Activated CD8-positive, alpha-beta T cell treated with anti-CD3 and anti-CD28 coated beads, Interleukin-2, amount 10 ng/mL, durations not matched to agents 7 days and 5 days (primary cell): ENCODE measurements at regions of chr7 and their contacts with region 1.

Region 1: DNA sequence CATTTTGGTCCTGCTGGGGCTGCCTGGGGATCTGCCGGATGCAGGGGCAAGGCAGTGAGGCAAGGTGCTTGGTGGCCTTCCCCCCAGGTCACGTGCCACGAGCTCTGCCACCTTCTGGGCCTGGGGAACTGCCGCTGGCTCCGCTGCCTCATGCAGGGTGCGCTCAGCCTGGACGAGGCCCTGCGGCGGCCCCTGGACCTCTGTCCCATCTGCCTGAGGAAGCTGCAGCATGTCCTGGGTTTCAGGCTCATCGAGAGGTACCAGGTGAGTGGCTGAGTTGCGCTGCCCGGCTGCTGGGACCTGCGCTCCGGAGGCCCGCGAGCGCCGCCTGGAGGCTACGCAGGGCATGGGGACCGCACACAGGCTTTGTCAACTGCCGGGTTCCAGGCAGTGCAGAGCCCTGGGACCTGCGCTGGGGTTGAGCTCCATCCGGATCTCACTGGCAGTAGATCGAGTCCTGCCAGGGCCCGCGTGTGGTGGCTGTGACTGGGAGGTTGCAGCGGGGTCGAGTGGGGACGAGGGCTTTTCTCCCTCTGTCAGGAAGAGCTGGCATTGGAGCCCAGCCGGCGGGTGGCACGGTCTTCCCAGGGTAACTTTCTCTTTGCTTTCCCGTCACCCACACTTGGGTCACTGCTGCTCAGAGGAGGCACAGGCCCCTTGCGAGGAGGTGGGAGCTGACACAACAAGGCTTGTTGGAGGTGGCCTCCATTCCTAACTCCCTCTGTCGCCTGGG is 21.7 kb downstream of the AMZ1 start:
- DNase-seq: peak; percentile 88
- ATAC-seq: peak; percentile 91
- H3K4me3 Mint-ChIP-seq: peak overlapping the region; percentile 51
- H3K27ac Mint-ChIP-seq: peak overlapping the region; percentile 63
- H3K4me1 Mint-ChIP-seq: peaks cover 41% of the 10 kb centered on the region
- H3K27me3 Mint-ChIP-seq: peaks cover 29% of the 10 kb centered on the region

Region 2: DNA sequence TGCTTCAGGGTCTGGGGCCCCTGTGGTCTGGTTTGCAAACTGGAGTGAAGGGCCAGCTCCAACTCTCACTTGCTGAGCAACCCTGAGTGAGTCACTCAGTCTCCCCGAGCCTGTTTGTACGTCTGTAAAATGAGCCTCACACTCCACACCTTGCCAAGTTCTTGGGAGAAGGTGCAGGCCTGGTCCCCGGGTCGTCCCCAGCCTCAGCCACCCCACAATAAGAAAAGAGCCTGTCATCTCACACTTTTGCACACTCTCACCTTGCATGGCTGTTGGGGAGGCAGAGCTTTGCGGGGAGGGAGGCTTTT is 238.7 kb before region 1 on chr7:
- CTCF ChIA-PET with region 1: interaction called, 13 read pairs
- POLR2A ChIA-PET with region 1: no interaction called
- DNase-seq: no peak
- ATAC-seq: no peak
- H3K4me3 Mint-ChIP-seq: no peak overlapping the region
- H3K27ac Mint-ChIP-seq: no peak overlapping the region
- H3K4me1 Mint-ChIP-seq: peaks cover 7% of the 10 kb centered on the region
- H3K27me3 Mint-ChIP-seq: peaks cover 15% of the 10 kb centered on the region

Region 3: GRCh38 chr7:2608921-2609411 is 100.8 kb before region 1 on chr7:
- CTCF ChIA-PET with region 1: interaction called, 12 read pairs
- POLR2A ChIA-PET with region 1: no interaction called
- DNase-seq: peak; percentile 50
- ATAC-seq: peak; percentile 59
- H3K4me3 Mint-ChIP-seq: no peak overlapping the region
- H3K27ac Mint-ChIP-seq: peak overlapping the region; percentile 2
- H3K4me1 Mint-ChIP-seq: peaks cover 13% of the 10 kb centered on the region
- H3K27me3 Mint-ChIP-seq: peaks cover 3% of the 10 kb centered on the region

Region 4: GRCh38 chr7:2641406-2642393 is 68.0 kb before region 1 on chr7:
- CTCF ChIA-PET with region 1: interaction called, 34 read pairs
- POLR2A ChIA-PET with region 1: interaction called, 6 read pairs
- DNase-seq: no peak
- ATAC-seq: no peak
- H3K4me3 Mint-ChIP-seq: no peak overlapping the region
- H3K27ac Mint-ChIP-seq: no peak overlapping the region
- H3K4me1 Mint-ChIP-seq: peaks cover 33% of the 10 kb centered on the region
- H3K27me3 Mint-ChIP-seq: no peaks in the 10 kb centered on the region

Region 5: GRCh38 chr7:2680792-2681490 is 28.8 kb before region 1 on chr7:
- CTCF ChIA-PET with region 1: interaction called, 31 read pairs
- POLR2A ChIA-PET with region 1: no interaction called
- DNase-seq: peak; percentile 68
- ATAC-seq: peak; percentile 41
- H3K4me3 Mint-ChIP-seq: no peak overlapping the region
- H3K27ac Mint-ChIP-seq: no peak overlapping the region
- H3K4me1 Mint-ChIP-seq: peaks cover 2% of the 10 kb centered on the region
- H3K27me3 Mint-ChIP-seq: peaks cover 12% of the 10 kb centered on the region

Region 6: GRCh38 chr7:2698581-2699288 is 11.0 kb before region 1 on chr7:
- CTCF ChIA-PET with region 1: interaction called, 116 read pairs
- POLR2A ChIA-PET with region 1: interaction called, 48 read pairs
- DNase-seq: peak; percentile 94
- ATAC-seq: peak; percentile 96
- H3K4me3 Mint-ChIP-seq: peak overlapping the region; percentile 58
- H3K27ac Mint-ChIP-seq: peak overlapping the region; percentile 88
- H3K4me1 Mint-ChIP-seq: peaks cover 32% of the 10 kb centered on the region
- H3K27me3 Mint-ChIP-seq: peaks cover 23% of the 10 kb centered on the region

Region 7: GRCh38 chr7:2757904-2758672 is 48.4 kb after region 1 on chr7:
- CTCF ChIA-PET with region 1: interaction called, 16 read pairs
- POLR2A ChIA-PET with region 1: interaction called, 5 read pairs
- DNase-seq: peak; percentile 60
- ATAC-seq: peak; percentile 82
- H3K4me3 Mint-ChIP-seq: no peak overlapping the region
- H3K27ac Mint-ChIP-seq: peak overlapping the region; percentile 61
- H3K4me1 Mint-ChIP-seq: peaks cover 35% of the 10 kb centered on the region
- H3K27me3 Mint-ChIP-seq: no peaks in the 10 kb centered on the region